ENCODE measurements at regions of chr17 and their contacts with region 1.

Region 1: GRCh38 chr17:14926526-14927122 is 338.5 kb downstream of the PMP22 start:
- DNase-seq: peak; percentile 64
- H3K4me3 Mint-ChIP-seq: no peak overlapping the region
- H3K27ac Mint-ChIP-seq: no peak overlapping the region
- H3K4me1 Mint-ChIP-seq: no peaks in the 10 kb centered on the region
- H3K27me3 Mint-ChIP-seq: peaks cover 4% of the 10 kb centered on the region

Region 2: DNA sequence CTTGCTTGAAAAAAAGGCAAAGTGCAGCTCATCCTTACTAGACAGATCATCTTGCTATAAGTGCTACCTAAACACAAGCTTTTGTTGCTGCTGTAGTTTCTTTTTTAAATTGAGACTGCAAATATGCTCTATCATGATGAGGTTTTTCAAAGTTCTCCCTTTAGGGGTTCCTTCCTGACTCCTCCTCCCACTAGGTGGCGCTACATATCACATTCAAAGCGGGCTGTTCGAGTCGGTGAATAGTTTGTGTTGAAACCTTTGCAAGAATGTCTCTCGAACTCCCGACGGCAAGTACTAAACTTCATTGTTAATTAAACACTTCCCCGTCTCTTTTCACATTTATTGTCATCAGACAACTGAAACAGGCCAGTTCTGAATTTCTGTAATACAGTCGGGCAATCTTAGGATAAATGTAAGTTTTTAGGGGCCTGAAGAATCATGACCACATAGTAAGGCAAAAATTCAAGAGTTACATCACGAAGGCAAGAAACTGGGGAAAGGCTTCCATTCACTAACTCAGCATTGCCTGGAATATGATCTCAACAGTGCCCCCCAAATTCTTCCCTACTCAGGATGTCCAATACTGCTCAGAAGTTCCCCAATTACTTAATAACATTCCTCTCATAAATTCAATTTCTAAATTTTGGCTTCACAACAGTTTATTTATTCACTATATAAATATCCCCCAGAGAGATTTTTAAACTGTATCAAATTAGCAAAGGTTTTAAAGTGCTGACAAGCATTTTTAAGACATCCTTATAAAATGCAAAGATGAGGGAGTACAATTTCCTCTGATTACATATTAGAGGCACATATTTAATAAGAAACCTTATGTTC is 1331.6 kb before region 1 on chr17:
- CTCF ChIA-PET with region 1: interaction called, 12 read pairs
- DNase-seq: peak; percentile 85
- H3K4me3 Mint-ChIP-seq: no peak overlapping the region
- H3K27ac Mint-ChIP-seq: no peak overlapping the region
- H3K4me1 Mint-ChIP-seq: peaks cover 3% of the 10 kb centered on the region
- H3K27me3 Mint-ChIP-seq: peaks cover 19% of the 10 kb centered on the region